Caco-2 (cell line): ENCODE measurements at regions of chr7 and their contacts with region 1.

Region 1: GRCh38 chr7:150420987-150421674 is 29.3 kb upstream of the GIMAP8 start:
- DNase-seq: peak; percentile 88 to 91
- H3K4me3 ChIP-seq: no peak overlapping the region
- H3K4me3 Mint-ChIP-seq: peak overlapping the region; percentile 30
- H3K27ac Mint-ChIP-seq: peak overlapping the region; percentile 13
- H3K4me1 ChIP-seq: 0 out of 2 replicates have a peak, but pooled peaks cover 4% of the 10 kb centered on the region
- H3K4me1 Mint-ChIP-seq: peaks cover 10% of the 10 kb centered on the region
- H3K27me3 ChIP-seq: no peaks in the 10 kb centered on the region
- H3K27me3 Mint-ChIP-seq: peaks cover 3% of the 10 kb centered on the region
- CTCF ChIP-seq: peak; percentile 85 to 87

Region 2: GRCh38 chr7:150322833-150323681 is 98.1 kb before region 1 on chr7 and contains the starts of genes ACTR3C and LRRC61:
- CTCF ChIA-PET with region 1: no interaction called
- POLR2A ChIA-PET with region 1: no interaction called
- intact Hi-C with region 1: loop called (anchors 1 kb)
- DNase-seq: peak; percentile 81 to 87
- H3K4me3 ChIP-seq: peak within 1 kb of the TSS; percentile 93
- H3K4me3 Mint-ChIP-seq: peak within 1 kb of the TSS; percentile 95
- H3K27ac Mint-ChIP-seq: peak within 1 kb of the TSS; percentile 92
- H3K4me1 ChIP-seq: peaks cover 27% of the 10 kb centered on the region
- H3K4me1 Mint-ChIP-seq: peaks cover 19% of the 10 kb centered on the region
- H3K27me3 ChIP-seq: no peaks in the 10 kb centered on the region
- H3K27me3 Mint-ChIP-seq: no peaks in the 10 kb centered on the region
- CTCF ChIP-seq: peak; percentile 35 to 57
- total RNA-seq, gene ACTR3C: 8.0 and 9.2 TPM in 2 replicates
- total RNA-seq, gene LRRC61: 32.4 and 35.8 TPM in 2 replicates

Region 3: GRCh38 chr7:150356265-150356897 is 64.8 kb before region 1 on chr7:
- CTCF ChIA-PET with region 1: no interaction called
- POLR2A ChIA-PET with region 1: no interaction called
- intact Hi-C with region 1: loop called (anchors 1 kb)
- DNase-seq: peak in 1 of 2 experiments; percentile 42
- H3K4me3 ChIP-seq: no peak overlapping the region
- H3K4me3 Mint-ChIP-seq: no peak overlapping the region
- H3K27ac Mint-ChIP-seq: no peak overlapping the region
- H3K4me1 ChIP-seq: no peaks in the 10 kb centered on the region
- H3K4me1 Mint-ChIP-seq: peaks cover 11% of the 10 kb centered on the region
- H3K27me3 ChIP-seq: no peaks in the 10 kb centered on the region
- H3K27me3 Mint-ChIP-seq: no peaks in the 10 kb centered on the region
- CTCF ChIP-seq: peak; percentile 68 to 73

Region 4: GRCh38 chr7:150368096-150368883 is 52.8 kb before region 1 on chr7 and contains the start of gene REPIN1:
- CTCF ChIA-PET with region 1: no interaction called
- POLR2A ChIA-PET with region 1: no interaction called
- intact Hi-C with region 1: loop called (anchors 2 kb)
- DNase-seq: peak; percentile 95 to 96
- H3K4me3 ChIP-seq: peak within 1 kb of the TSS; percentile 91
- H3K4me3 Mint-ChIP-seq: peak within 1 kb of the TSS; percentile 88
- H3K27ac Mint-ChIP-seq: peak within 1 kb of the TSS; percentile 99
- H3K4me1 ChIP-seq: peaks cover 17% of the 10 kb centered on the region
- H3K4me1 Mint-ChIP-seq: peaks cover under 1% of the 10 kb centered on the region
- H3K27me3 ChIP-seq: no peaks in the 10 kb centered on the region
- H3K27me3 Mint-ChIP-seq: no peaks in the 10 kb centered on the region
- CTCF ChIP-seq: no peak
- total RNA-seq, gene REPIN1: 141 and 148 TPM in 2 replicates

Region 5: GRCh38 chr7:150378853-150379440 is 42.2 kb before region 1 on chr7 and contains the start of gene ZNF775:
- CTCF ChIA-PET with region 1: interaction called, 3 read pairs
- POLR2A ChIA-PET with region 1: no interaction called
- intact Hi-C with region 1: loop called (anchors 1 kb)
- DNase-seq: peak; percentile 95 to 98
- H3K4me3 ChIP-seq: peak within 1 kb of the TSS; percentile 95
- H3K4me3 Mint-ChIP-seq: peak within 1 kb of the TSS; percentile 87
- H3K27ac Mint-ChIP-seq: peak within 1 kb of the TSS; percentile 89
- H3K4me1 ChIP-seq: peaks cover 58% of the 10 kb centered on the region
- H3K4me1 Mint-ChIP-seq: peaks cover 48% of the 10 kb centered on the region
- H3K27me3 ChIP-seq: no peaks in the 10 kb centered on the region
- H3K27me3 Mint-ChIP-seq: no peaks in the 10 kb centered on the region
- CTCF ChIP-seq: no peak
- total RNA-seq, gene ZNF775: 4.0 and 4.4 TPM in 2 replicates

Region 6: DNA sequence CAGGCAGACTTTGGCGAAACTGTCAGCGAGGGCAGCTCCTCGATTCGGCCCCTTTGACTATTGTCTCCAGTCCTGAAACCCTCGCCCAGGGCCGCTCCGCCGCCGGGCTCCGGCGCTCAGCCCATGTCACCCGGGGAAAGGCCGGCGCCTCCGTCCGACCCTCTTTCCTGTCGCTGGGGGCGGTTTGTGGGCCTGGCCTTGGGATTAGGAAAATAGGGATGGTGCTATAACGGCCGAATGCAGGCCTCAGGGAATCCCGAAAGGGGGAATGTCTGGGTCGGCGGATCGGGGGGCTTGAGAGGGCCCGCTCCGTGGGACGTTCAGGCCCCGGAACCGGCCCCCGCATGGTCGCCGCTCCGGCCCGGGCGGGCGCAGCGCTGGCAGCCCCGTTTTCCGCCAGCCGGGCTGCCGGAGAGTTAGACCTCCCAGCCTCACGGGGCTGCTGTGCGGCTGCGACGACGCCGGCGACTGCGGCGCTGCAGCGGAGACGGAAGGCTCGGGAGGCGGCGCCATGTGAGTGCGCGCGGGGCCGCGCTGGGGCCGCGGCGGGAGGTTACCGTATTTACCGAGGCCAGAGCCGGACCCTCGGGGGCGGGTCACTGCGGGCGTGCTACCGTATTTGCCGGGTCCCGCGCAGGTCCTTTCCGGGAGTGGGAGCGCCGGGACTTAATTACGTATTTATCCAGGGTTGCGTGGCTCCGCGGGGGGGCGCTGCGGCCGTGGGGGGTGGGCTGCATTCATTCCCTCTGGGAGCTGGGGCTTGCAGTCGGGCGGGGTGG is 16.1 kb before region 1 on chr7:
- CTCF ChIA-PET with region 1: no interaction called
- POLR2A ChIA-PET with region 1: no interaction called
- intact Hi-C with region 1: loop called (anchors 1 kb)
- DNase-seq: peak; percentile 90 to 93
- H3K4me3 ChIP-seq: peak overlapping the region; percentile 83
- H3K4me3 Mint-ChIP-seq: peak overlapping the region; percentile 88
- H3K27ac Mint-ChIP-seq: peak overlapping the region; percentile 45
- H3K4me1 ChIP-seq: peaks cover 49% of the 10 kb centered on the region
- H3K4me1 Mint-ChIP-seq: peaks cover 42% of the 10 kb centered on the region
- H3K27me3 ChIP-seq: no peaks in the 10 kb centered on the region
- H3K27me3 Mint-ChIP-seq: no peaks in the 10 kb centered on the region
- CTCF ChIP-seq: peak in 1 of 2 experiments; percentile 18

Region 7: GRCh38 chr7:150410680-150411346 is 10.3 kb before region 1 on chr7:
- CTCF ChIA-PET with region 1: no interaction called
- POLR2A ChIA-PET with region 1: no interaction called
- intact Hi-C with region 1: loop called (anchors 1 kb)
- DNase-seq: no peak
- H3K4me3 ChIP-seq: no peak overlapping the region
- H3K4me3 Mint-ChIP-seq: no peak overlapping the region
- H3K27ac Mint-ChIP-seq: no peak overlapping the region
- H3K4me1 ChIP-seq: peaks cover 14% of the 10 kb centered on the region
- H3K4me1 Mint-ChIP-seq: peaks cover 6% of the 10 kb centered on the region
- H3K27me3 ChIP-seq: no peaks in the 10 kb centered on the region
- H3K27me3 Mint-ChIP-seq: no peaks in the 10 kb centered on the region
- CTCF ChIP-seq: no peak

Region 8: GRCh38 chr7:151068068-151068773 is 647.1 kb after region 1 on chr7:
- CTCF ChIA-PET with region 1: no interaction called
- POLR2A ChIA-PET with region 1: no interaction called
- intact Hi-C with region 1: no loop called
- DNase-seq: no peak
- H3K4me3 ChIP-seq: no peak overlapping the region
- H3K4me3 Mint-ChIP-seq: peak overlapping the region; percentile 39
- H3K27ac Mint-ChIP-seq: peak overlapping the region; percentile 80
- H3K4me1 ChIP-seq: peaks cover 25% of the 10 kb centered on the region
- H3K4me1 Mint-ChIP-seq: no peaks in the 10 kb centered on the region
- H3K27me3 ChIP-seq: no peaks in the 10 kb centered on the region
- H3K27me3 Mint-ChIP-seq: no peaks in the 10 kb centered on the region
- CTCF ChIP-seq: no peak